ENCODE measurements at regions of chr1 and their contacts with region 1.

Region 1: GRCh38 chr1:43367904-43368645 is at the start of gene ELOVL1:
- DNase-seq: peak; percentile 40 to 94 (median 58)
- ATAC-seq: peak; percentile 91
- H3K4me3 ChIP-seq: peak within 1 kb of the TSS; percentile 89
- H3K4me3 Mint-ChIP-seq: peak within 1 kb of the TSS; percentile 86 to 97 (median 92)
- H3K27ac ChIP-seq: peak within 1 kb of the TSS; percentile 90
- H3K27ac Mint-ChIP-seq: peak within 1 kb of the TSS; percentile 88 to 95 (median 91)
- H3K4me1 ChIP-seq: peaks cover 13 to 22% of the 10 kb centered on the region in 2 donors
- H3K4me1 Mint-ChIP-seq: peaks cover 24 to 47% (median 42%) of the 10 kb centered on the region in 7 donors
- H3K27me3 ChIP-seq: no peaks in the 10 kb centered on the region
- H3K27me3 Mint-ChIP-seq: no peaks in the 10 kb centered on the region
- total RNA-seq, gene ELOVL1: 25.9 to 65.3 (median 32.3) TPM

Region 2: DNA sequence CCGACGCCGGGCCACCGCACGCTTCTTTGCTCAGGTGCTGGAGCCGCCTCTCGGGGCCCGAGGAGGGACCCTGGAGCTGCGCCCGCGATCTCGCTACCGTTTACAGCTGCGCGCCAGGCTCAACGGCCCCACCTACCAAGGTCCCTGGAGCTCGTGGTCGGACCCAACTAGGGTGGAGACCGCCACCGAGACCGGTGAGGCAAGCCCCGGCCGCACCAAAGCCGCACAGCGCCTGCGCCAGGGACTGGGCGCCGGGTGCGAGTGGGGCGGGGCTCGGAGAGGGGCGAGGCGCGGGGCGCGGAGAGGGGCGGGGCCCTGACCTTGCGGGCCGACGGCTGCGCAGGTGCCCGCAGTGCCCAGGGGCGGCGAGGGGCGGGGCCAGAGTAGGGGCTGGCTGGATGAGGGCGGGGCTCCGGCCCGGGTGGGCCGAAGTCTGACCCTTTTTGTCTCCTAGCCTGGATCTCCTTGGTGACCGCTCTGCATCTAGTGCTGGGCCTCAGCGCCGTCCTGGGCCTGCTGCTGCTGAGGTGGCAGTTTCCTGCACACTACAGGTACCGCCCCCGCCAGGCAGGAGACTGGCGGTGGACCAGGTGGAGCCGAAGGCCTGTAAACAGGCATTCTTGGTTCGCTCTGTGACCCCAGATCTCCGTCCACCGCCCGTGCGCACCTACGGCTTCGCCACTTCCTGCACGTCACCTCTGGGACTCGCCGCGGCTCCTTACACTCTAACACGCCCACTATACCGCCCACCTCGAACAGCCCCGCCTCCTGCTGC is 19.1 kb before region 1 on chr1:
- CTCF ChIA-PET with region 1: no interaction called
- POLR2A ChIA-PET with region 1: no interaction called
- intact Hi-C with region 1: loop called in 1 of 2 experiments (anchors 1 kb)
- DNase-seq: peak; percentile 26 to 79 (median 58)
- ATAC-seq: peak; percentile 91
- H3K4me3 ChIP-seq: peak overlapping the region; percentile 35
- H3K4me3 Mint-ChIP-seq: peak overlapping the region; percentile 68 to 89 (median 79)
- H3K27ac ChIP-seq: peak overlapping the region; percentile 79
- H3K27ac Mint-ChIP-seq: peak overlapping the region; percentile 60 to 97 (median 94)
- H3K4me1 ChIP-seq: peaks cover 0 to 4% of the 10 kb centered on the region in 2 donors
- H3K4me1 Mint-ChIP-seq: peaks cover 8 to 11% (median 9%) of the 10 kb centered on the region in 7 donors
- H3K27me3 ChIP-seq: no peaks in the 10 kb centered on the region
- H3K27me3 Mint-ChIP-seq: no peaks in the 10 kb centered on the region

Region 3: DNA sequence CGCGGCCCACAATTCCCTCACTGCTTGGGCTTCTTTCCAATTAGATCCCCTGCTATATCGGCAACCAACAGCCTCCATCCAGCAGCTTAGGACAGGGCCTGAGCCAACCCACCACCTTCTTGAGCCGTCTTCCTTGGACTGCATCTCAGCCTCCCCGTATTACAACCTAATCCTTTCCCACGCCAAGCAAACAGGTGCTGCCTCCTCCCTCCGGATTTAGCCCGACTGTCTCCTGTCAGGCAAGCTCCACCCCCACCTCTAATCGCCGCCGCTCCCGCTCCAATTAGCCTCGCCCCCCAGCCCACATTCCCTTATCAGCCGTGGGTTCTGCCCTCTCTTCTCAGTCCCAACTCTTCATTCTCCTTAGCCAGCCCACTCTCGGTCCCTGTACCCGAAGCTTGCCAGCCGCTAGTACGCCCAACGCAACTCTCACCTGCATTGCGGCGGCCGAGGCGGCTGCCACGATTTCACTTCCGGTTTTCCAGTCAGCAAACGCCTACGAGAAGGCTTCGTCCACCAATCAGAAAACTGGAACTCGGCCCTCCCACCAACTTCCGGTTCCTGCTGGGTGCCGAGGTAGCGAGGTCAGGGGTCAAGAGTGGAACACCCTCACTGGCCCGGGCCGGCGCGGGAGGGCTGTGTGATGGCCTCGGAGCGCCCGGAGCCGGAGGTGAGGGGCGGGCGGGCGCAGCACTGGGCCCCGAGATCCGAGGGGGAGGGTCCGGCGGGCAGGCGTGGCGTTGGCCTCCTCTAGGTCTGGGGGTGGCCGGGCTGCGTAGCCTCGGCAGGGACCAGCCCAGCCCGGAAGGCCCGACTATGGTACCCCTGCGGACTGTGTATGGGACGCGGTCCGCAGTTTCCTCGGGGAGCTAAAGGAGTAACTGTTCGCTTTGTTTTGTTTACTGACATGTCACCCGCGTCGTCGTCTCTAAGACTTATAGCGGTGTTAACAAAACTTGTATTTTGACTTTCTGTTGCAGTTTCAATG is 21.5 kb after region 1 on chr1 and contains the starts of genes MED8 and SZT2:
- CTCF ChIA-PET with region 1: interaction called, 4 read pairs
- POLR2A ChIA-PET with region 1: interaction called, 6 read pairs
- intact Hi-C with region 1: loop called (anchors 1 kb)
- DNase-seq: peak; percentile 75 to 91 (median 88)
- ATAC-seq: peak; percentile 98
- H3K4me3 ChIP-seq: peak within 1 kb of the TSS; percentile 96
- H3K4me3 Mint-ChIP-seq: peak within 1 kb of the TSS; percentile 95 to 100 (median 100)
- H3K27ac ChIP-seq: peak within 1 kb of the TSS; percentile 93
- H3K27ac Mint-ChIP-seq: peak within 1 kb of the TSS; percentile 95 to 100 (median 99)
- H3K4me1 ChIP-seq: peaks cover 20 to 21% of the 10 kb centered on the region in 2 donors
- H3K4me1 Mint-ChIP-seq: peaks cover 42 to 69% (median 56%) of the 10 kb centered on the region in 7 donors
- H3K27me3 ChIP-seq: no peaks in the 10 kb centered on the region
- H3K27me3 Mint-ChIP-seq: no peaks in the 10 kb centered on the region
- total RNA-seq, gene MED8: 14.5 to 37.8 (median 30.1) TPM
- total RNA-seq, gene SZT2: 80.5 to 153 (median 131) TPM

Region 4: DNA sequence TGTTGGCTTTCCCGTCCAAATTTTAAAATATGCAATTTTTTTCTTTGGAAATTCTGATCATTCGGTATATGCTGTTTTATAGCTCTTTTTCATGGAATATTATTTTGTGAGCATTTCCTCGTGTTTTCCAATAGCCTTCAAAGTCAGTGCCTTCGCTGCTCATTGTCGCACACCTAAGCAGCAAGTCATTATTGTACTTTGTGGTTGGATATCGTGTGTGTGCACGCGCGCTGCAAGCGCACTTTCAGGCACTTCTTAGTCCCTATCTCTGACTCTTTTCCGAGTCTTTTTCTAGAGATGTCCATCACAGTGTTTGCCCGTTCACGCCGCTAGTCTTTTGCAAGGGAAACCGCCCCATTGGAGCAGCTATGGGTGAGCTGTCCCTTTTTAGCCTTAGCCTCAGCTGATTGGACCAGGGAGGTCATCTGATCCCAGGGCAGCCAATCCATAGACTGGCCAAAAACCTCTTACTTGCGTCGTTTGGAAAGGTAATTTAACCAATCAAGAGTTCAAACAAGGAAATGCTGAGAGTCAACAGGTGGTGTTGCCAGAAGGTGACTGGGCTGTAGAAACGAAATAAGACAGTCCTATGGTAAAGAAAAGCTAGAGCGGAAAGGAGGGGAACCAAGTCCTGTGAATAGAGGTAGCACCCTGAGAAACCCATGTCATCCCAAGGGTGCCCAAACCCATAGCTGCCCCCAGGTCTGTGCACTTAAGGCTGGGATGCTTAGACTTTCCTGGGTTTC is 86.4 kb after region 1 on chr1:
- CTCF ChIA-PET with region 1: no interaction called
- POLR2A ChIA-PET with region 1: no interaction called
- intact Hi-C with region 1: loop called (anchors 5 kb)
- DNase-seq: peak in 8 of 9 donors; percentile 53 to 67 (median 63)
- ATAC-seq: peak; percentile 85
- H3K4me3 ChIP-seq: peak overlapping the region; percentile 56
- H3K4me3 Mint-ChIP-seq: peak overlapping the region; percentile 86 to 95 (median 89)
- H3K27ac ChIP-seq: peak overlapping the region; percentile 57
- H3K27ac Mint-ChIP-seq: peak overlapping the region; percentile 63 to 96 (median 85)
- H3K4me1 ChIP-seq: peaks cover 0 to 9% of the 10 kb centered on the region in 2 donors
- H3K4me1 Mint-ChIP-seq: peaks cover 9 to 22% (median 18%) of the 10 kb centered on the region in 7 donors
- H3K27me3 ChIP-seq: no peaks in the 10 kb centered on the region
- H3K27me3 Mint-ChIP-seq: peaks cover 5 to 35% (median 12%) of the 10 kb centered on the region in 5 donors

Region 5: GRCh38 chr1:43481491-43481890 is 113.4 kb after region 1 on chr1:
- CTCF ChIA-PET with region 1: no interaction called
- POLR2A ChIA-PET with region 1: no interaction called
- intact Hi-C with region 1: no loop called
- DNase-seq: no peak
- ATAC-seq: no peak
- H3K4me3 ChIP-seq: no peak overlapping the region
- H3K4me3 Mint-ChIP-seq: no peak overlapping the region
- H3K27ac ChIP-seq: no peak overlapping the region
- H3K27ac Mint-ChIP-seq: no peak overlapping the region
- H3K4me1 ChIP-seq: no peaks in the 10 kb centered on the region
- H3K4me1 Mint-ChIP-seq: peaks cover 0 to 7% (median 2%) of the 10 kb centered on the region in 7 donors
- H3K27me3 ChIP-seq: no peaks in the 10 kb centered on the region
- H3K27me3 Mint-ChIP-seq: peaks cover 0 to 29% (median 6%) of the 10 kb centered on the region in 5 donors